ENCODE measurements at regions of chr2 and their contacts with region 1.

Region 1: GRCh38 chr2:24297663-24298062 is 62.7 kb downstream of the ITSN2 start:
- DNase-seq: no peak
- ATAC-seq: no peak
- H3K4me3 Mint-ChIP-seq: no peak overlapping the region
- H3K27ac Mint-ChIP-seq: no peak overlapping the region
- H3K4me1 Mint-ChIP-seq: no peaks in the 10 kb centered on the region
- H3K27me3 Mint-ChIP-seq: no peaks in the 10 kb centered on the region
- CTCF ChIP-seq: no peak

Region 2: GRCh38 chr2:24280161-24280560 is 17.5 kb before region 1 on chr2:
- CTCF ChIA-PET with region 1: no interaction called
- POLR2A ChIA-PET with region 1: no interaction called
- intact Hi-C with region 1: loop called (anchors 2 kb)
- DNase-seq: no peak
- ATAC-seq: no peak
- H3K4me3 Mint-ChIP-seq: no peak overlapping the region
- H3K27ac Mint-ChIP-seq: no peak overlapping the region
- H3K4me1 Mint-ChIP-seq: peaks cover 11% of the 10 kb centered on the region
- H3K27me3 Mint-ChIP-seq: no peaks in the 10 kb centered on the region
- CTCF ChIP-seq: no peak

Region 3: GRCh38 chr2:25014616-25015015 is 717.0 kb after region 1 on chr2:
- CTCF ChIA-PET with region 1: no interaction called
- POLR2A ChIA-PET with region 1: interaction called, 12 read pairs
- intact Hi-C with region 1: no loop called
- DNase-seq: no peak
- ATAC-seq: no peak
- H3K4me3 Mint-ChIP-seq: no peak overlapping the region
- H3K27ac Mint-ChIP-seq: no peak overlapping the region
- H3K4me1 Mint-ChIP-seq: peaks cover 3% of the 10 kb centered on the region
- H3K27me3 Mint-ChIP-seq: no peaks in the 10 kb centered on the region
- CTCF ChIP-seq: no peak

Measured in activated B cell treated with CpG ODN at 0.5 μM for 24 hours (primary cell).